ENCODE measurements at regions of chr17 and their contacts with region 1.

Region 1: DNA sequence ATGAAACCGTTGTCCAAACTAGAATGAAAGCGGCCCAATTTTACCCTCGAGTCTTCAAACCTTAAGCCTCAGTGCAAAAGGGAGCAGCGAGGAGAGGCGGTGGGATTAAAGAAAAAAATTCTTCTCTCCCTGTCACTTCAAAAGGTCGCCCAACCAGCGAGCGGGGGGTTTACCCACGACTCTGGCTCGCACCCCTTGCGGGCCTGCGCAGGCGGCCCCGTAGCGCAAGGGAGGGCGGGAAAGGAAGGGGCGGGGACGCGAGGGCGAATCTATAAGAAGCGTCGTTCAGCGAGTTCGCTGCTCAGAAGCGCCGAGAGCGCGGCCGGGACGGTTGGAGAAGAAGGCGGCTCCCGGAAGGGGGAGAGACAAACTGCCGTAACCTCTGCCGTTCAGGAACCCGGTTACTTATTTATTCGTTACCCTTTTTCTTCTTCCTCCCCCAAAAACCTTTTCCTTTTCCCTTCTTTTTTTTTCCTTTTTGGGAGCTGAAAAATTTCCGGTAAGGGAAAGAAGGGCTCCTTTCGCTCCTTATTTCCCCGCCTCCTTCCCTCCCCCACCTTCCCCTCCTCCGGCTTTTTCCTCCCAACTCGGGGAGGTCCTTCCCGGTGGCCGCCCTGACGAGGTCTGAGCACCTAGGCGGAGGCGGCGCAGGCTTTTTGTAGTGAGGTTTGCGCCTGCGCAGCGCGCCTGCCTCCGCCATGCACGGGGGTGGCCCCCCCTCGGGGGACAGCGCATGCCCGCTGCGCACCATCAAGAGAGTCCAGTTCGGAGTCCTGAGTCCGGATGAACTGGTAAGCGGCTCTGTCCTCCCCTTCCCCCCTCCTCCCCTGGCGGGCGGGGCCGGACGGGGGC is at the start of gene POLR2A:
- DNase-seq: peak; percentile 89 to 97 (median 94)
- ATAC-seq: peak; percentile 78
- H3K4me3 ChIP-seq: peak within 1 kb of the TSS; percentile 63
- H3K27ac ChIP-seq: peak within 1 kb of the TSS; percentile 100
- H3K4me1 ChIP-seq: peaks cover 16 to 36% of the 10 kb centered on the region in 2 experiments; a peak in 4 of 5 replicates
- H3K27me3 ChIP-seq: no peaks in the 10 kb centered on the region
- CTCF ChIP-seq: no peak
- EP300 ChIP-seq: peak; percentile 14; the same call in 1 of the 2 replicates
- POLR2A ChIP-seq: peak; percentile 100
- RAD21 ChIP-seq: no peak
- polyA plus RNA-seq, gene POLR2A: 1.3 to 1.5 TPM

Region 2: GRCh38 chr17:7403977-7404736 is 80.1 kb before region 1 on chr17 and contains the start of gene TMEM256:
- CTCF ChIA-PET with region 1: no interaction called
- POLR2A ChIA-PET with region 1: interaction called, 23 read pairs
- in situ Hi-C with region 1: no loop called
- intact Hi-C with region 1: loop called (anchors 5 kb)
- DNase-seq: peak; percentile 75 to 98 (median 85)
- ATAC-seq: peak; percentile 98
- H3K4me3 ChIP-seq: peak within 1 kb of the TSS; percentile 68
- H3K27ac ChIP-seq: peak within 1 kb of the TSS; percentile 78
- H3K4me1 ChIP-seq: peaks cover 11 to 25% of the 10 kb centered on the region in 2 experiments; a peak in 3 of 5 replicates
- H3K27me3 ChIP-seq: no peaks in the 10 kb centered on the region
- CTCF ChIP-seq: no peak
- EP300 ChIP-seq: no peak
- POLR2A ChIP-seq: peak; percentile 86
- RAD21 ChIP-seq: no peak
- polyA plus RNA-seq, gene TMEM256: 114 to 117 TPM

Region 3: GRCh38 chr17:7468804-7469389 is 15.4 kb before region 1 on chr17:
- CTCF ChIA-PET with region 1: no interaction called
- POLR2A ChIA-PET with region 1: interaction called, 10 read pairs
- in situ Hi-C with region 1: no loop called
- intact Hi-C with region 1: no loop called
- DNase-seq: no peak
- ATAC-seq: no peak
- H3K4me3 ChIP-seq: no peak overlapping the region
- H3K27ac ChIP-seq: no peak overlapping the region
- H3K4me1 ChIP-seq: peaks cover 8 to 20% of the 10 kb centered on the region in 2 experiments
- H3K27me3 ChIP-seq: no peaks in the 10 kb centered on the region
- CTCF ChIP-seq: no peak
- EP300 ChIP-seq: no peak
- POLR2A ChIP-seq: no peak
- RAD21 ChIP-seq: no peak

Region 4: GRCh38 chr17:7508190-7508589 is 23.9 kb after region 1 on chr17:
- CTCF ChIA-PET with region 1: no interaction called
- POLR2A ChIA-PET with region 1: interaction called, 18 read pairs
- in situ Hi-C with region 1: no loop called
- intact Hi-C with region 1: no loop called
- DNase-seq: peak in 1 of 4 experiments; percentile 6
- ATAC-seq: no peak
- H3K4me3 ChIP-seq: no peak overlapping the region
- H3K27ac ChIP-seq: no peak overlapping the region
- H3K4me1 ChIP-seq: no peaks in the 10 kb centered on the region; a peak in 1 of 5 replicates
- H3K27me3 ChIP-seq: no peaks in the 10 kb centered on the region
- CTCF ChIP-seq: no peak
- EP300 ChIP-seq: no peak
- POLR2A ChIP-seq: no peak
- RAD21 ChIP-seq: no peak

Region 5: GRCh38 chr17:7572588-7573323 is 88.5 kb after region 1 on chr17:
- CTCF ChIA-PET with region 1: no interaction called
- POLR2A ChIA-PET with region 1: interaction called, 11 read pairs
- in situ Hi-C with region 1: no loop called
- intact Hi-C with region 1: no loop called
- DNase-seq: peak; percentile 89 to 98 (median 93)
- ATAC-seq: peak; percentile 94
- H3K4me3 ChIP-seq: peak overlapping the region; percentile 99
- H3K27ac ChIP-seq: peak overlapping the region; percentile 98
- H3K4me1 ChIP-seq: peaks cover 8 to 23% of the 10 kb centered on the region in 2 experiments; a peak in 4 of 5 replicates
- H3K27me3 ChIP-seq: no peaks in the 10 kb centered on the region
- CTCF ChIP-seq: no peak
- EP300 ChIP-seq: no peak
- POLR2A ChIP-seq: peak; percentile 99
- RAD21 ChIP-seq: no peak

Region 6: DNA sequence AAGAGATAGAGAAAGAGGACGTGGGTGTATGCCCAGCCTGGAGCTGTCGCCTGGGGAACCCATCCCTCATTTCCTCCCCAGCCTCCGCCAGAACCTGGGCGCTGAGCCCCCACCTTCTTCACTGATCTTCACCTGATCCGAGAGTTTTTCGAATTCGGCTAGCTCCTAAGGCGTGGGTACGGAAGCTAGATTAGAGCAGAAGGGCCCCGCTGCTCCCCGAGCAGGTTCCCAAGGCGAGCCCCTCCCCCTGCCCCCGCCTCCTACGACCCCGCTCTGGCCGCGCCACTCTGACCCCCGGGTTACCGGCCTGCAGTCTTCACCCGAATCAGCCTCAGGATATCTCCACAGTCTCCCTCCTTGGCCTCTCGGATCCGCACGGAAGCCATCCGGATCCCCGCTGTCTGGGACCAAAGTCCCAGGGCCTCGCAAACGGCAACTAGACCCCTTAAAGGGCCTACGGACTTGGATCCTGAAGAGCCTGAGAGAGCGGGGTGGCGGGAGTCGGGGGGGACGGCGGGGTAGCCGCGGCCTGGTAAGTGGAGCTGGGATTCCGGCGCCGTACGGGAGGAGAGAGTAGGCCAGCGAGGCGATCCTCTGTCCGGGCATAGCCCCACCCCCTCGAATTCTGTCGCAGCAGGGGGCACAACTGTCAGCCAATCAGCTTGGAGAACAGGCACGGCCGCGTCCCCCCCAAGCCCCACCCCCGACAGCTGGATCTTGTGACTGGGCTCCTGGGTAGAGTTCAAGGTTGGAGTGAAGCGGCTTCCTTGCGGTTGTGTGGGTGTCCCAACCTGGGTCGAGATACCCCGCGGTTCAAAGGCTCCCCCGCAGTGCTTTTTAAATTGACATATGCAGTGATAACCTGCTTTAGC is 143.2 kb after region 1 on chr17 and contains the start of gene SAT2:
- CTCF ChIA-PET with region 1: no interaction called
- POLR2A ChIA-PET with region 1: no interaction called
- in situ Hi-C with region 1: no loop called
- intact Hi-C with region 1: no loop called
- DNase-seq: peak; percentile 95 to 98 (median 98)
- ATAC-seq: peak; percentile 93
- H3K4me3 ChIP-seq: peak within 1 kb of the TSS; percentile 51
- H3K27ac ChIP-seq: peak within 1 kb of the TSS; percentile 31; the same call in 2 of the 3 replicates
- H3K4me1 ChIP-seq: peaks cover 0 to 17% of the 10 kb centered on the region in 2 experiments; a peak in 4 of 5 replicates
- H3K27me3 ChIP-seq: no peaks in the 10 kb centered on the region
- CTCF ChIP-seq: no peak
- EP300 ChIP-seq: peak; percentile 42; the same call in 1 of the 2 replicates
- POLR2A ChIP-seq: peak; percentile 42; the same call in 1 of the 2 replicates
- RAD21 ChIP-seq: no peak
- polyA plus RNA-seq, gene SAT2: 2.0 to 3.6 TPM

Region 7: DNA sequence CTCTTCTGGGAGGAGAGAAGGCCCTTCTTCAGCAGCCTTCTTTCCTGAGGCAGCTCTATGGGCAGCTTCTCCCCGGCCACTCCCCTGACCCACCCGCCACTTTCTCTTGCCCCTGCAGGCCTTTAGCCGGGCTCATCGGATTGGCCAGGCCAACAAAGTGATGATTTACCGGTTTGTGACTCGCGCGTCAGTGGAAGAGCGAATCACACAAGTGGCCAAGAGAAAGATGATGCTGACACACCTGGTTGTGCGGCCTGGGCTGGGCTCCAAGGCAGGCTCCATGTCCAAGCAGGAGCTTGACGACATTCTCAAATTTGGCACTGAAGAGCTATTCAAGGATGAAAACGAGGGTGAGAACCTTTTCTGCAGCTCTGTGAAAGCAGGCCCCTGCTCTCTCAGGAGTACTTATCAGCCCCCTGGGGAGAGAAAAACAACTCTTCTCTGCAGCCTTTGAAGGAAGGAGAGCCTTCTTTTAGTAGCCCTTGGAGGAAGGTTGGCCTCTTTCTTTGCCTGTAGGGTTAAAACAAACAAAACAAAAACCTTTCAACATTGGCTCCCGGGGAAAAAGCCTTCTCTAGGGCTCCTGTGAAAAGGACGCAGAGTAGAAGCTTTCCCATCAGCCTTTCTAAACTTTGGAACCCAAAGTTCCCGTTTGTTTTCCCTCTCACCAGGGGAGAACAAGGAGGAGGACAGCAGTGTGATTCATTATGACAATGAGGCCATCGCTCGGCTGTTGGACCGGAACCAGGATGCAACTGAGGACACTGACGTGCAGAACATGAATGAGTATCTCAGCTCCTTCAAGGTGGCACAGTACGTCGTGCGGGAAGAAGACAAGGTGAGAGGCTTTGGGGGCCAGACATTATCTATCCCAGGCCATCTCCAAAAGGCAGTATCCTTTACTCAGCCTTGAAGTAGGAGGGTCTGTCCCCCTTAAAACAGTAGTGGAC is 419.1 kb after region 1 on chr17:
- CTCF ChIA-PET with region 1: no interaction called
- POLR2A ChIA-PET with region 1: no interaction called
- in situ Hi-C with region 1: no loop called
- intact Hi-C with region 1: no loop called
- DNase-seq: no peak
- ATAC-seq: no peak
- H3K4me3 ChIP-seq: no peak overlapping the region
- H3K27ac ChIP-seq: no peak overlapping the region
- H3K4me1 ChIP-seq: no peaks in the 10 kb centered on the region
- H3K27me3 ChIP-seq: no peaks in the 10 kb centered on the region
- CTCF ChIP-seq: no peak
- EP300 ChIP-seq: no peak
- POLR2A ChIP-seq: no peak
- RAD21 ChIP-seq: no peak

Measured in K562 (cell line).